Adrenal gland (tissue), 19 donors: ENCODE measurements at regions of chr16 and their contacts with region 1.

Region 1: DNA sequence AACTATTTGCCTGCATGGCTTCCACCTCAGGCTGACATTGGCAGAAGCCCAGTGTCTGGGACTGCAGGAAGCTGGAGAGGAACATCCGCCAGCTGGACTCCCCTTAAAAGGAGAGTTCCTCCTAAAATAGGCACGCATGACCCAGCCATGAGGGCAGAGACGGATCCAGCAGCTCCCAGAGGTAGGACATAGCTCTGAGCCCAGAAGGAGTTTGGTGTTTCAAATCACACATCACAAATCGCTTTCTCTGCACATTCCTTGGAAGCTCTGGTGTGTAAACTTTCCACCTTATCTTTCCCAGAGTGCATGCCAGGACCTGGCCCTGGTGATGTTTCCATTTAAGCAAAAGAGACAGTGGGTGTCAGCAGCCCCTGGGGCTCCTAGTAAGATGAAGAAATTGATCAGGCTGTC is 231.1 kb upstream of the CDH5 start:
- DNase-seq: peak; percentile 24 to 71 (median 33)
- H3K4me3 ChIP-seq: no peak overlapping the region
- H3K27ac ChIP-seq: peak overlapping the region in 1 of 5 donors; percentile 4
- H3K4me1 ChIP-seq: peaks cover 0 to 11% of the 10 kb centered on the region in 2 donors
- H3K27me3 ChIP-seq: no peaks in the 10 kb centered on the region
- CTCF ChIP-seq: no peak
- POLR2A ChIP-seq: no peak

Region 2: DNA sequence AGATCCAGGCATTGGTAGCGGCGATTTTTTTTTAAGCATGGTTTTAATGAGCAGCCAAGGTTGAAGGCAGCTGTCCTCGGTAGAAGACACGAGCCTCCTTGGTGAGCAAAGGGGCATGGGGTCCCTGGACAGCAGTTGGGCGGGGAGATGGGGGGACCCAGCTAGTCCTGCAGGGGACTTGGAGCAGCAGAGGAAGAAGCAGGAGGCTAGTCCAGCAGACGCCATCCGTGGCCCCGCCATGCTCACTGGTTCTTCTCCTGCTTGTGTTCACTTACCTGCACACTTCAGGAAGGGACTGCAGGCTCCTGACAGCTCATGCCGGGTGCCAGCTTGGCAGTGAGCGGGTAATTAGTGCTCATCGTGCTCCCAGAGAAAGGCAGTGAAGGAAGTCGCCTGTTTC is 100.9 kb after region 1 on chr16:
- intact Hi-C with region 1: loop called in 1 of 2 experiments (anchors 5 kb)
- DNase-seq: no peak
- H3K4me3 ChIP-seq: no peak overlapping the region
- H3K27ac ChIP-seq: no peak overlapping the region
- H3K4me1 ChIP-seq: no peaks in the 10 kb centered on the region
- H3K27me3 ChIP-seq: no peaks in the 10 kb centered on the region
- CTCF ChIP-seq: no peak
- POLR2A ChIP-seq: no peak